IMR-90 (cell line): ENCODE measurements at regions of chr5 and their contacts with region 1.

Region 1: DNA sequence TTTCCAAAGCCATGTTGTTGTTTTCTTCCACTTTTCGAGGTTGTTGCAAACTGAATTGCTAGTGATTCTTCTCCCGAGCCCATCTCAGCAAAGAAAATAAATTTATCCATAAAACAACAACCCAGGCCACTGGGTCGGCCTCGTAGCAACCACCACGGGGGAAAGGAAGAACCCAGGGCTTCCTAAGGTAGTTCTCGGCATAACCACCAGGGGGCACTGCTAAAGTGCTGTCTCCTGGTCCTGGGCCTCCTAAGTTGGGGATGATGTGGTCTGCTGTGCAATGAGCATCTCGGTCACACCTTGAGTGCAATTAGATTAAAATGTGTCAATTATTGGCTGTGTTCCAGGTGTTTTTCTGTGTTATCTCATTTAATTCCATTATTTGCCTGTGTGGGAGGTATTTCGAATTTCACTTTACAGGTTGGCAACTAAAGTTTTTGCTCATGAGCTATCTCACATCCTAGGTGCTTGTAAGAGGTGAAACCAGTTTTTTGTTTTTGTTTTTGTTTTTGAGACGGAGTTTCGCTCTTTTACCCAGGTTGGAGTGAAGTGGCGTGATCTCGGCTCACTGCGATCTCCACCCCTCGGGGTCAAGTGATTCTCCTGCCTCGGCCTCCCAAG is 102.8 kb upstream of the DAP start:
- DNase-seq: peak; percentile 36
- ATAC-seq: no peak
- H3K4me3 ChIP-seq: no peak overlapping the region
- H3K27ac ChIP-seq: no peak overlapping the region
- H3K4me1 ChIP-seq: peaks cover 5% of the 10 kb centered on the region
- H3K27me3 ChIP-seq: no peaks in the 10 kb centered on the region
- CTCF ChIP-seq: peak; percentile 66
- POLR2A ChIP-seq: no peak
- RAD21 ChIP-seq: peak; percentile 69

Region 2: GRCh38 chr5:10849278-10849677 is 14.6 kb before region 1 on chr5:
- CTCF ChIA-PET with region 1: no interaction called
- POLR2A ChIA-PET with region 1: no interaction called
- dilution Hi-C with region 1: no loop called
- in situ Hi-C with region 1: no loop called
- intact Hi-C with region 1: no loop called
- DNase-seq: peak; percentile 76
- ATAC-seq: no peak
- H3K4me3 ChIP-seq: no peak overlapping the region
- H3K27ac ChIP-seq: no peak overlapping the region
- H3K4me1 ChIP-seq: no peaks in the 10 kb centered on the region
- H3K27me3 ChIP-seq: no peaks in the 10 kb centered on the region
- CTCF ChIP-seq: no peak
- POLR2A ChIP-seq: no peak
- RAD21 ChIP-seq: no peak

Region 3: DNA sequence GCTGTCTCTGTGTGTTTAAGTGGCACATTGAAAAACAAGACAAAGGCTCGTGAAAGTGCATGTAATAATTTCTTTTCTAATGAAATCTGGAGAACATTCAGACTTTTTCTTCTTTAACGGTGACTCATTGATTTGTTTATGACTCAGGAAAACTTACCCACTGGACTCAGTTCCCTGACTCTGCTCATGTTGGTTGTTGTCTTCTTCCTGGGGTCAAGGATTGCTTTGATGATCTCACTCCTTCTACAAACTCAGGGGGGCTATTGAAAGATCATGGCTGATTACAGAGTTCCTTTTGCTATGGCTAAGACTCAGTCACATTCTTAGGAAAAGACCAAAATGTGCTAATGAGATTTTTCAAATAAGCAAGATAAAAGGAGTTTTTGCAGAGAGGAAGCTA is 38.3 kb after region 1 on chr5:
- CTCF ChIA-PET with region 1: no interaction called
- POLR2A ChIA-PET with region 1: no interaction called
- dilution Hi-C with region 1: no loop called
- in situ Hi-C with region 1: no loop called
- intact Hi-C with region 1: loop called (anchors 5 kb)
- DNase-seq: peak; percentile 87
- ATAC-seq: peak; percentile 88
- H3K4me3 ChIP-seq: no peak overlapping the region
- H3K27ac ChIP-seq: peak overlapping the region; percentile 43
- H3K4me1 ChIP-seq: peaks cover 11% of the 10 kb centered on the region
- H3K27me3 ChIP-seq: no peaks in the 10 kb centered on the region; the same call in 1 of the 2 replicates
- CTCF ChIP-seq: no peak
- POLR2A ChIP-seq: no peak
- RAD21 ChIP-seq: no peak

Region 4: DNA sequence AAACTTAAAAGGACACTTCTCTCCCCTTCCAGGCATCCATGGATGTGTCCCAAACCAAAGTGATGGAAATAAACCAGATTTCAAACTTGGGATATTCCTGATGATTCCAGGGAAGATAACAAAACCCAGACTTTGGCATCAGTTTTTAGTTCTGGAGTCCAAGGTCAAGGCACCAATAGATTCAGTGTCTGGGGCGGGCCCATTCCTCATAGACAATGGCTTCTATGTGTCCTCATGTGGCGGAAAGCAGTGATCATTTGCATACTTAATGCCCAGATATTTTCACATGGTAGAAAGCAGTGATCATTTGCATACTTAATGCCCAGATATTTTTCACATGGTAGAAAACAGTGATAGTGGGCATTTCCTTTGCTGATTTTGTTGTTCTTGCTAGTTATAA is 48.6 kb after region 1 on chr5:
- CTCF ChIA-PET with region 1: no interaction called
- POLR2A ChIA-PET with region 1: no interaction called
- dilution Hi-C with region 1: no loop called
- in situ Hi-C with region 1: no loop called
- intact Hi-C with region 1: no loop called
- DNase-seq: no peak
- ATAC-seq: no peak
- H3K4me3 ChIP-seq: no peak overlapping the region
- H3K27ac ChIP-seq: no peak overlapping the region
- H3K4me1 ChIP-seq: peaks cover 2% of the 10 kb centered on the region
- H3K27me3 ChIP-seq: no peaks in the 10 kb centered on the region
- CTCF ChIP-seq: no peak
- POLR2A ChIP-seq: no peak
- RAD21 ChIP-seq: no peak

Region 5: GRCh38 chr5:10987930-10988504 is 124.1 kb after region 1 on chr5:
- CTCF ChIA-PET with region 1: no interaction called
- POLR2A ChIA-PET with region 1: no interaction called
- dilution Hi-C with region 1: no loop called
- in situ Hi-C with region 1: no loop called
- intact Hi-C with region 1: loop called (anchors 10 kb)
- DNase-seq: no peak
- ATAC-seq: peak; percentile 53; the same call in 1 of the 2 replicates
- H3K4me3 ChIP-seq: no peak overlapping the region
- H3K27ac ChIP-seq: no peak overlapping the region
- H3K4me1 ChIP-seq: no peaks in the 10 kb centered on the region
- H3K27me3 ChIP-seq: peaks cover 13% of the 10 kb centered on the region
- CTCF ChIP-seq: peak; percentile 36
- POLR2A ChIP-seq: no peak
- RAD21 ChIP-seq: peak; percentile 31; the same call in 1 of the 2 replicates

Region 6: DNA sequence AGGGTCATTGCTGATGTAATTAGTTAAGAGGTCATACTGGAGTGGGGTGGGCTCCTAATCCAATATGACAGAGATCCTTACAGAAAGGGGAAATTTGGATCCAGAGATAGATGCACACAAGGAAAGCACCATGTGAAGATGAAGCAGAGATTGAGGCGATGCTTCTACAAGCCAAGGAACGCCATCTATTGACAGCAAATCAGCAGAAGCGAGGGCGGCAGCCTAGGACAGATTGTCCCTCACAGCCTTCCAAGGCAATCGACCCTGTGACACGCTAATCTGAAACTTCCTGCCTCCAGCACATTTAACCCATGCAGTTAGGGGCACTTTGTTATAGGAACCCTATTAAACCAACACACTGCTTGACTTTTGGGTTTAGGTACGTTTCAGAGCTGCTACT is 182.3 kb after region 1 on chr5:
- CTCF ChIA-PET with region 1: no interaction called
- POLR2A ChIA-PET with region 1: no interaction called
- dilution Hi-C with region 1: no loop called
- in situ Hi-C with region 1: no loop called
- intact Hi-C with region 1: loop called (anchors 5 kb)
- DNase-seq: peak; percentile 18
- ATAC-seq: peak; percentile 77
- H3K4me3 ChIP-seq: no peak overlapping the region
- H3K27ac ChIP-seq: no peak overlapping the region
- H3K4me1 ChIP-seq: no peaks in the 10 kb centered on the region
- H3K27me3 ChIP-seq: peaks cover 7% of the 10 kb centered on the region
- CTCF ChIP-seq: peak; percentile 37; the same call in 1 of the 2 replicates
- POLR2A ChIP-seq: no peak
- RAD21 ChIP-seq: peak; percentile 46

Region 7: DNA sequence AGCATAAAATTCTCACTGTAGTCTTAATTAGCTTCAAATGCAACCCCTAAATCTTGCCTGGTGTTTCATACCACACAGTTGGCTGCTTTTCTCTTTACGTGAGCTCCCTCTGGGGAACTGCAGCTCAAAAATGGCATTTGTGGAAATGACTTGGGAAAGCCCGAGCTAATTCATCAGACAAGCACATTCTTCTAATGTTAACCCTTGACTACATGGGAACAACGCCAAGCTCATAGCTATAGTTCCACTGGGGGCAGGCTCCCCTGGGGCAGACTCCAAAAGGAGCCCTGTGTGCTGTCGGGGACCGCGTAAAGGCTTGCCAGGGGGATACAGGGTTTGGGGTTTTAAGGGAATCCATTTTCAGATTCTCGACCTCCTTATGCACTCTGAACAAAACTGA is 198.5 kb after region 1 on chr5:
- CTCF ChIA-PET with region 1: no interaction called
- POLR2A ChIA-PET with region 1: no interaction called
- dilution Hi-C with region 1: no loop called
- in situ Hi-C with region 1: no loop called
- intact Hi-C with region 1: loop called (anchors 5 kb)
- DNase-seq: peak; percentile 2
- ATAC-seq: no peak; the same call in 1 of the 2 replicates
- H3K4me3 ChIP-seq: no peak overlapping the region
- H3K27ac ChIP-seq: no peak overlapping the region
- H3K4me1 ChIP-seq: no peaks in the 10 kb centered on the region
- H3K27me3 ChIP-seq: peaks cover 8% of the 10 kb centered on the region
- CTCF ChIP-seq: no peak
- POLR2A ChIP-seq: no peak
- RAD21 ChIP-seq: no peak

Region 8: GRCh38 chr5:11182441-11183268 is 318.8 kb after region 1 on chr5:
- CTCF ChIA-PET with region 1: no interaction called
- POLR2A ChIA-PET with region 1: no interaction called
- dilution Hi-C with region 1: no loop called
- in situ Hi-C with region 1: no loop called
- intact Hi-C with region 1: loop called (anchors 2 kb)
- DNase-seq: peak; percentile 47
- ATAC-seq: peak; percentile 69
- H3K4me3 ChIP-seq: no peak overlapping the region
- H3K27ac ChIP-seq: no peak overlapping the region
- H3K4me1 ChIP-seq: no peaks in the 10 kb centered on the region
- H3K27me3 ChIP-seq: no peaks in the 10 kb centered on the region
- CTCF ChIP-seq: peak; percentile 63
- POLR2A ChIP-seq: no peak
- RAD21 ChIP-seq: peak; percentile 72